Endothelial cell of umbilical vein (primary cell): ENCODE measurements at regions of chr17 and their contacts with region 1.

Region 1: GRCh38 chr17:72985881-72986720 is 106.4 kb downstream of the SLC39A11 start:
- DNase-seq: peak; percentile 53
- H3K4me3 ChIP-seq: no peak overlapping the region
- H3K27ac ChIP-seq: no peak overlapping the region
- H3K4me1 ChIP-seq: peaks cover 12% of the 10 kb centered on the region
- H3K27me3 ChIP-seq: no peaks in the 10 kb centered on the region
- CTCF ChIP-seq: peak; percentile 88 to 89
- POLR2A ChIP-seq: no peak

Region 2: GRCh38 chr17:72906306-72906705 is 79.8 kb before region 1 on chr17:
- CTCF ChIA-PET with region 1: interaction called, 7 read pairs
- POLR2A ChIA-PET with region 1: no interaction called
- dilution Hi-C with region 1: no loop called
- intact Hi-C with region 1: loop called (anchors 1 kb)
- DNase-seq: no peak
- H3K4me3 ChIP-seq: no peak overlapping the region
- H3K27ac ChIP-seq: peak overlapping the region; percentile 70
- H3K4me1 ChIP-seq: peaks cover 19% of the 10 kb centered on the region
- H3K27me3 ChIP-seq: no peaks in the 10 kb centered on the region
- CTCF ChIP-seq: no peak
- POLR2A ChIP-seq: no peak

Region 3: GRCh38 chr17:72931163-72931562 is 54.9 kb before region 1 on chr17:
- CTCF ChIA-PET with region 1: no interaction called
- POLR2A ChIA-PET with region 1: no interaction called
- dilution Hi-C with region 1: no loop called
- intact Hi-C with region 1: no loop called
- DNase-seq: no peak
- H3K4me3 ChIP-seq: no peak overlapping the region
- H3K27ac ChIP-seq: no peak overlapping the region
- H3K4me1 ChIP-seq: no peaks in the 10 kb centered on the region
- H3K27me3 ChIP-seq: no peaks in the 10 kb centered on the region
- CTCF ChIP-seq: no peak
- POLR2A ChIP-seq: no peak

Region 4: DNA sequence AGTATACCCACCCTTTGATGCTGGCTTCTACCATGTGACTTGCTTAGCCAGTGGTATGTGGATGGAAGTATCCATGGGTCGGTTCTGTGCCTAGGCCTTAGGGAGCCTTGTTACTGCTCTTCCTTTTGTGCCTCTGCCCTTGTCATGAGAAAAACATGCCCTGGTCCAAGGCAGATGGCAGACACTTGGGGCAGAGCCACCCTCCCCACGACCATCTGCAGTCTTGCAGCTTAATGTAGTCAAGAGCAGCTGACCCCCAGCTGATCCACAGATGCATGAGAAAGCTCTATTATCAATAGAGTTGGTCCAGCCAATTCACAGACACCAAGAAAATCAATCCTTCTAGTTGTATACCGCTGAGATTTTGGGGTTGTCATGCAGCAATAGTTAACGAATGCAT is 10.7 kb after region 1 on chr17:
- CTCF ChIA-PET with region 1: interaction called, 16 read pairs
- POLR2A ChIA-PET with region 1: no interaction called
- dilution Hi-C with region 1: no loop called
- intact Hi-C with region 1: no loop called
- DNase-seq: no peak
- H3K4me3 ChIP-seq: no peak overlapping the region
- H3K27ac ChIP-seq: no peak overlapping the region
- H3K4me1 ChIP-seq: no peaks in the 10 kb centered on the region
- H3K27me3 ChIP-seq: no peaks in the 10 kb centered on the region
- CTCF ChIP-seq: no peak
- POLR2A ChIP-seq: no peak

Region 5: DNA sequence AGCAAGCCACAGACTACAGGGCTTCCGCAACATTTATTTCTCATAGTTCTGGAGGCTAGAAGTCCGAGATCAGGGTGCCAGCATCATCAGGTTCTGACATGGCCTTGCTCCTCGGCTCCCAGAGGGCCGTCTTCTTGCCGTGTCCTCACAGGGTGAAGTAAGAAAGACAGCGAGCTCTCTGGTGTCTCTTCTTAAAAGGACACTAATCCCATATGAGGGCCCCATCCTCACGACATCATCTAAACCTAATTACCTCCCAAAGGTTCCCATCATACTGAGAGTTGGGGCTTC is 18.1 kb after region 1 on chr17:
- CTCF ChIA-PET with region 1: interaction called, 13 read pairs
- POLR2A ChIA-PET with region 1: no interaction called
- dilution Hi-C with region 1: no loop called
- intact Hi-C with region 1: no loop called
- DNase-seq: no peak
- H3K4me3 ChIP-seq: no peak overlapping the region
- H3K27ac ChIP-seq: no peak overlapping the region
- H3K4me1 ChIP-seq: no peaks in the 10 kb centered on the region
- H3K27me3 ChIP-seq: no peaks in the 10 kb centered on the region
- CTCF ChIP-seq: no peak
- POLR2A ChIP-seq: no peak

Region 6: GRCh38 chr17:73011016-73011486 is 24.9 kb after region 1 on chr17:
- CTCF ChIA-PET with region 1: interaction called, 3 read pairs
- POLR2A ChIA-PET with region 1: no interaction called
- dilution Hi-C with region 1: no loop called
- intact Hi-C with region 1: loop called (anchors 2 kb)
- DNase-seq: peak; percentile 37
- H3K4me3 ChIP-seq: peak overlapping the region in 1 of 3 experiments; percentile 45
- H3K27ac ChIP-seq: no peak overlapping the region
- H3K4me1 ChIP-seq: peaks cover 9% of the 10 kb centered on the region
- H3K27me3 ChIP-seq: no peaks in the 10 kb centered on the region
- CTCF ChIP-seq: no peak
- POLR2A ChIP-seq: no peak

Region 7: GRCh38 chr17:73092523-73093135 is 106.5 kb after region 1 on chr17 and contains the start of gene SLC39A11:
- CTCF ChIA-PET with region 1: interaction called, 13 read pairs
- POLR2A ChIA-PET with region 1: no interaction called
- dilution Hi-C with region 1: no loop called
- intact Hi-C with region 1: loop called (anchors 2 kb)
- DNase-seq: peak; percentile 92
- H3K4me3 ChIP-seq: peak within 1 kb of the TSS; percentile 47 to 83 (median 61)
- H3K27ac ChIP-seq: no peak within 1 kb of the TSS
- H3K4me1 ChIP-seq: peaks cover 9% of the 10 kb centered on the region
- H3K27me3 ChIP-seq: no peaks in the 10 kb centered on the region
- CTCF ChIP-seq: no peak
- POLR2A ChIP-seq: peak; percentile 73
- total RNA-seq, gene SLC39A11: 11.9 and 12.4 TPM in 2 replicates

Region 8: DNA sequence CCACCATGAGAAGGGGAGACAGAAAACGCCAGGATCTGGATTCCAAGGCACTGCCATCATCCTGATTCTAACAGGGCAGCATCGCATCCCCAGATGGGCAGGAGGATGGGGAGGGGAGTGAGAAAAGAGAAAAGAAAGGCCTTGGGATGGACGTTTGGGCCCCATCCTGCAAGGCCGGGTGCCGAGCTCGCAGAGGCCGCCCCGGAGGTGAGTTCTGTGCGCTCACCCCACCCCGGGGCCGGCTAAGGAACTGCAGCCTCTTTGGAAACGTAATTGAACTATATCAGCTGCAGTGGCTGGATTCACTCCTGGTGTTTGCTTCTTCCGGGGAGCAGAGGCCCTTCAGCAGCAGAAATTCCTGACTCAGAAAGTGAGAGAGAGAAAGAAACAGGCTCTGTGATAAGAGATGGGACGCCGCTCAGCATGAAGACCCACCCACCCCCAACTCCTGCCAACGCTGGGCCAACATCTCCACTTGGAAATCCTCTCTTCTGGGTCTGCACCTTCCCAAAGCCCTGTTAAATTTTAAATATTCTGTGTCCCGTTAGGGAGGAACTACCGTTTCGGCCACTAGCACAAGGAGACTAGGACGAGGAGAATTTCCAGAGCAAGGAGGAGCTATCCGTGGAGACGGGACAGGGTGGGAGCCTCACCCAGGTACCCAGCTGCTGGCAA is 170.2 kb after region 1 on chr17:
- CTCF ChIA-PET with region 1: interaction called, 44 read pairs
- POLR2A ChIA-PET with region 1: no interaction called
- dilution Hi-C with region 1: no loop called
- intact Hi-C with region 1: loop called (anchors 1 kb)
- DNase-seq: peak; percentile 21
- H3K4me3 ChIP-seq: no peak overlapping the region
- H3K27ac ChIP-seq: no peak overlapping the region
- H3K4me1 ChIP-seq: no peaks in the 10 kb centered on the region
- H3K27me3 ChIP-seq: peaks cover 8 to 11% of the 10 kb centered on the region in 2 experiments
- CTCF ChIP-seq: peak; percentile 76 to 77
- POLR2A ChIP-seq: no peak

Region 9: DNA sequence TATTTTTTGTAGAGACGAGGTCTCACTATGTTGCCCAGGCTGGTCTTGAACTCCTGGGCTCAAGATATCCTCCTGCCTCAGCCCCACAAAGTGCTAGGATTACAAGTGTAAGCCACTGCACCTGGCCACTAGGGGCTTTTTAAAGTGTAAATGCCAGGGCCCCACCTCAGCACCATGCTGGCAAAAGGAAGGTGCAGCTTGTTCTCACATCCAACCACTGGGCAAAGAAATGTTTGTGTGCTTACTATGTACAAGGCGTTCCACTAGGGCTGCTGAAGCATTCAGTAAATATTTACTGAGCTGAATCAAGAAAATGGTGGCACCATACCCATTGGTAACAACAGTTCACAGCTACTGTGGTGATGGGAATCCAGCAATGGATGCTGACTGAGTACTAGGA is 229.3 kb after region 1 on chr17:
- CTCF ChIA-PET with region 1: no interaction called
- POLR2A ChIA-PET with region 1: no interaction called
- dilution Hi-C with region 1: no loop called
- intact Hi-C with region 1: no loop called
- DNase-seq: no peak
- H3K4me3 ChIP-seq: no peak overlapping the region
- H3K27ac ChIP-seq: no peak overlapping the region
- H3K4me1 ChIP-seq: no peaks in the 10 kb centered on the region
- H3K27me3 ChIP-seq: no peaks in the 10 kb centered on the region
- CTCF ChIP-seq: no peak
- POLR2A ChIP-seq: no peak